ENCODE measurements at regions of chr18 and their contacts with region 1.

Region 1: GRCh38 chr18:35240664-35241447 is at the start of gene ZNF397:
- DNase-seq: peak; percentile 98 to 99 (median 99)
- H3K4me3 ChIP-seq: peak within 1 kb of the TSS; percentile 8 to 66 (median 44)
- H3K27ac ChIP-seq: peak within 1 kb of the TSS; percentile 96 to 99 (median 97)
- H3K4me1 ChIP-seq: peaks cover 0 to 12% of the 10 kb centered on the region in 2 donors
- H3K27me3 ChIP-seq: no peaks in the 10 kb centered on the region
- CTCF ChIP-seq: peak in 1 of 6 experiments; percentile 21
- POLR2A ChIP-seq: peak; percentile 94 to 99
- total RNA-seq, gene ZNF397: 15.7 to 38.1 (median 29.3) TPM

Region 2: GRCh38 chr18:35290073-35290735 is 49.3 kb after region 1 on chr18 and contains the start of gene ZSCAN30:
- intact Hi-C with region 1: no loop called
- DNase-seq: peak; percentile 95 to 98 (median 96)
- H3K4me3 ChIP-seq: peak within 1 kb of the TSS; percentile 56 to 80 (median 71)
- H3K27ac ChIP-seq: peak within 1 kb of the TSS; percentile 23 to 94 (median 86)
- H3K4me1 ChIP-seq: peaks cover 18 to 40% of the 10 kb centered on the region in 2 donors
- H3K27me3 ChIP-seq: no peaks in the 10 kb centered on the region
- CTCF ChIP-seq: no peak
- POLR2A ChIP-seq: peak; percentile 43 to 91
- total RNA-seq, gene ZSCAN30: 16.0 to 34.0 (median 21.8) TPM

Region 3: GRCh38 chr18:35306588-35307250 is 65.9 kb after region 1 on chr18:
- intact Hi-C with region 1: loop called in 1 of 2 experiments (anchors 10 kb)
- DNase-seq: no peak
- H3K4me3 ChIP-seq: no peak overlapping the region
- H3K27ac ChIP-seq: no peak overlapping the region
- H3K4me1 ChIP-seq: no peaks in the 10 kb centered on the region
- H3K27me3 ChIP-seq: no peaks in the 10 kb centered on the region
- CTCF ChIP-seq: no peak
- POLR2A ChIP-seq: no peak

Region 4: DNA sequence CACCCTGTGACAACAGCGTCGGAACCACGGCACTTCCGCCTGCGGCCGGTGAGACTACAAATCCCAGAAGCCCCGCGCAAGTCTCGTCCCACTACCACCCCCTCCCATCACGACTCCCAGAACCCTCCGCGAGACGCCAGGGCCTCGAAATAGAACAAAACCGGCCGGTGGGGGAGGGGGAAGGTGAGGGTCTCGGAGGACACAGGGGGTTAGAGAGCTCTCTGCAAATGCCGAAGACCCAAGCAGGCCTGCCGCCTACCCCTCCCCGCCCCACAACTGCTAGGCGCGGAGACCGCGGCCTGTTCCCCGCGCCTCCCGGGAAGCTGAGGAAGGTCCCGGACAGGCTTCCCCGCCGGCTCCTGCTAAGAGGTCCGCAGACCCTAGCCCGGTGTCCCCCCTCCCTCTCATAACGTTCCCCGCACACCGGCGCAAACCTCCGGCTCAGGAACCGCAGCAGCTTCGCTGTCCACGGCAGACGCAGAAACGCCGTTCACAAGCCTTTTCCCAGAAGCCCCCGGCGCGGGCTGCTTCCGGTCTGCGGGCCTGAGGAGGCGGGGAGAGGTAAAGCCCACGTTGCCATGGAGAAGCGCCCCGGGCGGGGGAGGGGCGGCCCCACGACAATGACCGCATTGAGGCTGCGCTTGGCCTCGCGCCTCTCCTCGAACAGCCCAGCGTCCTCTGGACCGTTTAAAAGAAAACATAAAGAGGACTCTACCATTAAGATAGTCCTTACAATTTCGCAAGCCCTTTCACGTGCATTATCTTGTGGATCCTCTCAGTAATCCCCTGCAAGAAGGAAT is 103.3 kb after region 1 on chr18 and contains the start of gene ZNF24:
- intact Hi-C with region 1: loop called in 1 of 2 experiments (anchors 10 kb)
- DNase-seq: peak; percentile 97 to 99 (median 98)
- H3K4me3 ChIP-seq: peak within 1 kb of the TSS in 3 of 4 donors; percentile 44 to 83 (median 82)
- H3K27ac ChIP-seq: peak within 1 kb of the TSS; percentile 84 to 99 (median 97)
- H3K4me1 ChIP-seq: peaks cover 27 to 53% of the 10 kb centered on the region in 2 donors
- H3K27me3 ChIP-seq: no peaks in the 10 kb centered on the region
- CTCF ChIP-seq: no peak
- POLR2A ChIP-seq: peak; percentile 84 to 92
- total RNA-seq, gene ZNF24: 25.6 to 75.6 (median 54.1) TPM

Region 5: DNA sequence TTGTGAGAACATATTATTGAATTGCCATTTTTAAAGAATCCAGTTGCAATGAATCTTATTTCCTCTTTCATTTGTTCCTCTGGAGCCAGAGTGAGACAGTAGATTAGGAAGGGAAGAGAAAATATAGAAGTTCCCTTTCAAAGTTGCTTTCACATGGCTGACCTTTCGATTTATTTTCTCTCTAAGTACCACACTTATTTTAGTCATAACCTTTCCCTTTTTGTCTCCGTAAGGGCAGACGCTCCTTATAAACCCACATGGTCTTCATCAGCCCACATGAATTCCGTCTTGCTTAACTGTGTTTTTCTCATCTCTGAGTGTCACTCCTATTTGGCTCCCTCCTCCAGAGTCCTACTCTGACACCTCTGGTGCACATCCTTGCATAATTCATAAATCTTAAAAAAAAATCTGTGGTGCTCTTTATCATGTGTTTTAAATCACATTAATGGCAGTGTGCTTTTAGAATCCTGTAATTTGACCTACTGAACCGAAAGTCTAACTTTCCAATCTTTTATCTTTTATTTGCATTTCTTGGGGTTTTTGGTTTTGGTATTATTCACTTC is 174.7 kb after region 1 on chr18:
- intact Hi-C with region 1: no loop called
- DNase-seq: no peak
- H3K4me3 ChIP-seq: no peak overlapping the region
- H3K27ac ChIP-seq: no peak overlapping the region
- H3K4me1 ChIP-seq: peaks cover 0 to 10% of the 10 kb centered on the region in 2 donors
- H3K27me3 ChIP-seq: no peaks in the 10 kb centered on the region
- CTCF ChIP-seq: no peak
- POLR2A ChIP-seq: no peak

Region 6: DNA sequence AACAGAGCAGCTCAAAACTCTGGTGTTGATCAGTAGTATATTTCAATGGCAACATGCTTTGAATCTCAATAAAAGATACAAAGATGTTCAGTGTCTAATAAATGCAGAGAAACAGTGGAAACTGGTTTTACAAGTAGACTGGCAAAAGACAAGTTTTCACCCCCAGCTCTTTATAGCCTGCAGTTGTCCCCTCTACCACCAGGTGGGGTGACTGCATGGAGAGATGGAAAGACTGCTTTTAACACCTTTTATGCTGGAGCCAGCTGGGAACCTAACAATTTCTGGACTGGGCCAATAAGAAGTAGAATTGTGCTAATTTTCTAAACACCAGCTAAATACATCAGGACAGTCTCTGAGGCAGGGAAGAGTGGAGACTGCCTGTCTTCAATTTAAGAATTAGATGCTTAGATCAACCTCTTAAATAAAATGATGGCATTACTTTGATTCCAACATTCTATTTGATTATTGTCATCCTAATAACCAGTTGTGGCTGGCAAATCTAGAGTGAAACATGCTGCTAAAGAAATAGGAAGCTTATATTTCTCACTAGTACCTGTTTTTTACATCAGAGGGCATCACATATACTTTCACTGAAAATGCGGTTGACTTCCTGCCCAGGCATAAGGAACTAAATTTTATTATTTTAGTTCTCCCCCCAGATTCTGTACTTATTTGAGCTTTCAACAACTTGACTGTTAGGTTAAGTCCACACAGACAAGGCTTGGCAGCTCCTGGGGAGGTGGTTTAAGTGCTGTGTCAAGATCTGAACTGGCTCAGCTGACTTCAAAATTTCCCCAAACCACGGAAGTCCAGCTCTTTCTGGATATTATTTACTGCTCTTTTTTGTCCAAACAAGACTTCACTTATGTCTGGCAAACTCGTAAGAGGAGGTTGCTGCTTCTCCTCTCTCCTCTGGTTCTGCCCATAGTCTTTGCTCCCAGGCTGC is 1447.4 kb after region 1 on chr18:
- intact Hi-C with region 1: no loop called
- DNase-seq: peak; percentile 66 to 91 (median 70)
- H3K4me3 ChIP-seq: no peak overlapping the region
- H3K27ac ChIP-seq: no peak overlapping the region
- H3K4me1 ChIP-seq: no peaks in the 10 kb centered on the region
- H3K27me3 ChIP-seq: no peaks in the 10 kb centered on the region
- CTCF ChIP-seq: peak; percentile 80 to 89 (median 84)
- POLR2A ChIP-seq: no peak